ENCODE measurements at regions of chr12 and their contacts with region 1.

Region 1: GRCh38 chr12:112900299-112901145 is 6.2 kb upstream of the OAS1 start:
- DNase-seq: peak; percentile 18
- H3K4me3 Mint-ChIP-seq: no peak overlapping the region
- H3K27ac Mint-ChIP-seq: no peak overlapping the region
- H3K4me1 Mint-ChIP-seq: peaks cover 25% of the 10 kb centered on the region
- H3K27me3 Mint-ChIP-seq: peaks cover 13% of the 10 kb centered on the region

Region 2: GRCh38 chr12:112046003-112046402 is 854.5 kb before region 1 on chr12:
- intact Hi-C with region 1: no loop called
- DNase-seq: no peak
- H3K4me3 Mint-ChIP-seq: no peak overlapping the region
- H3K27ac Mint-ChIP-seq: no peak overlapping the region
- H3K4me1 Mint-ChIP-seq: no peaks in the 10 kb centered on the region
- H3K27me3 Mint-ChIP-seq: no peaks in the 10 kb centered on the region

Region 3: GRCh38 chr12:112924986-112925385 is 24.5 kb after region 1 on chr12:
- intact Hi-C with region 1: no loop called
- DNase-seq: no peak
- H3K4me3 Mint-ChIP-seq: no peak overlapping the region
- H3K27ac Mint-ChIP-seq: no peak overlapping the region
- H3K4me1 Mint-ChIP-seq: peaks cover 6% of the 10 kb centered on the region
- H3K27me3 Mint-ChIP-seq: no peaks in the 10 kb centered on the region

Region 4: DNA sequence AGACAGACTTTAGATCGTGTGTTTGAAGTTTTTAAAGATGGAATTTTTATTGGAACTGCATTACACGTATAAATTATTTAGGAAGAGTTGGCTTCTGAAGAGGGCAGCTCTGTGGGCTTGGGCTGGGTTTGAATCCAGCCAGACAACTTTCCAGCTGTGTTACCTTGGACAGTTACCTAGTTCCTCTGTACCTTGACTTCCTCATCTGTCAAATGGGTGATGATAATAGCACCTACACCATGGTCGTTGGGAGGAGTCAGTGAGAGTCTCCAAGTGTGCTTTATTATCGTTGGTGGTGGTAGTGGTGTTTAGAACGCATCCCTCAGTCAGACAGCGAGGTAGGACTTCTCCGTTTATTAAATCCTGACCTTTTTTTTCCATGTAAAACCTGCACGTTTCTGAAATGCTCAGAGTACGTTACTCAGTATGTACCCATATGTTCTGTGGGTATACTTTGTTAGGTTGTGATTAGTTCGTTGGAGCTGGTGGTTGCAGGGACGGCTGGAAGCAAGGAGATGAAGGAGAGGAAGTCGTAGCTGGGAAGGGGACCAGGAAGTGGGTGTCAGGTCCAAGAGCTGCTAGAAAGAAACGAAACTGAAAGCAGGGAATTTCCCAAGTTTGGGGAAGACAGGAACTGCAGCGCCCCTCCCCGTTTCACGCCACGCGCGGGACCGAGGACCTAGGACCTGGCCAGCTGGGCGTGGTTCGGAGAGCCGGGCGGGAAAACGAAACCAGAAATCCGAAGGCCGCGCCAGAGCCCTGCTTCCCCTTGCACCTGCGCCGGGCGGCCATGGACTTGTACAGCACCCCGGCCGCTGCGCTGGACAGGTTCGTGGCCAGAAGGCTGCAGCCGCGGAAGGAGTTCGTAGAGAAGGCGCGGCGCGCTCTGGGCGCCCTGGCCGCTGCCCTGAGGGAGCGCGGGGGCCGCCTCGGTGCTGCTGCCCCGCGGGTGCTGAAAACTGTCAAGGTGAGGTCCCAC is 37.5 kb after region 1 on chr12 and contains the start of gene OAS3:
- intact Hi-C with region 1: loop called (anchors 2 kb)
- DNase-seq: peak; percentile 72
- H3K4me3 Mint-ChIP-seq: peak within 1 kb of the TSS; percentile 80
- H3K27ac Mint-ChIP-seq: peak within 1 kb of the TSS; percentile 80
- H3K4me1 Mint-ChIP-seq: peaks cover 40% of the 10 kb centered on the region
- H3K27me3 Mint-ChIP-seq: no peaks in the 10 kb centered on the region
- total RNA-seq, gene OAS3: 27.2 and 29.6 TPM in 2 replicates

Region 5: DNA sequence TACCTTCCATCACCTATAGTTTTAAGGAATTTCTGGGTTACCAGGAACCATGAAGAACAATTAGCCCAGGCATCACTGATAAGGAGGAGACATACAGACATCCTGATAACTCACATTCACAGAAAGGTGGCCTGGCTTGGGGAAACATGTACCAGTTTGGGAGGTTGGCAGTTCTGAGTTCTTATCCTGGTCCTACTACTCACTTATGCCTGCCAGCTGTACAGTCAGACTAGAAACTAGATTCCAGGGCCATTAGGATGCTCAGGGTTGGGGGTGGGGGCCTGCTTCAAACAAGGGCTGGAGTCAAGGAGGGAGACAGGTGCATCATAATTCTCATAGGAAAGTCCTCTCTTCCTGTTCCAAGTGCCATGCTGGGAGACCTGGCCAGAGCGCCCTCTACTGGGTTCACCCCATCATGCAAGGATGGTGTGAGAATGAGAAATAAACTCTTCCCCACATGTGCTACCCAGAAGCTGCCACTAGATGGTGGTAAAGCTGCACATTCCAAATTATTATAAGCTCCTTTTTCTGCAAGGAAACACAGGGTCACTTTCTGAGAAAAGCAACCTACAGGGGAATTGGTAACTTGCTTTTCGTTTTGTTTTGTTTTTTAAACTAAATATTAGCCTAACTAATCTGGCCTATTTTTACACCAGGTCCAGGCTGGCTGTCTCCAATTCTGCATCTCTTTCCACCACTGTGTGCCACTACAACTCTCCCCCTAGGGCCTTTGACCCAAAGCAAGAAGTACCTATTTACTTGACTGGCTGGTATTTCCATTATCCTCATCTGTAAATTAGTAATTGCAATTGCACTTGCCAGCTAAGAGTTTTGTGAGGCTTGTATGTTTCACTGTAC is 92.2 kb after region 1 on chr12:
- intact Hi-C with region 1: loop called (anchors 2 kb)
- DNase-seq: peak; percentile 47
- H3K4me3 Mint-ChIP-seq: no peak overlapping the region
- H3K27ac Mint-ChIP-seq: peak overlapping the region; percentile 21
- H3K4me1 Mint-ChIP-seq: peaks cover 15% of the 10 kb centered on the region
- H3K27me3 Mint-ChIP-seq: no peaks in the 10 kb centered on the region